ENCODE measurements at regions of chr12 and their contacts with region 1.

Region 1: DNA sequence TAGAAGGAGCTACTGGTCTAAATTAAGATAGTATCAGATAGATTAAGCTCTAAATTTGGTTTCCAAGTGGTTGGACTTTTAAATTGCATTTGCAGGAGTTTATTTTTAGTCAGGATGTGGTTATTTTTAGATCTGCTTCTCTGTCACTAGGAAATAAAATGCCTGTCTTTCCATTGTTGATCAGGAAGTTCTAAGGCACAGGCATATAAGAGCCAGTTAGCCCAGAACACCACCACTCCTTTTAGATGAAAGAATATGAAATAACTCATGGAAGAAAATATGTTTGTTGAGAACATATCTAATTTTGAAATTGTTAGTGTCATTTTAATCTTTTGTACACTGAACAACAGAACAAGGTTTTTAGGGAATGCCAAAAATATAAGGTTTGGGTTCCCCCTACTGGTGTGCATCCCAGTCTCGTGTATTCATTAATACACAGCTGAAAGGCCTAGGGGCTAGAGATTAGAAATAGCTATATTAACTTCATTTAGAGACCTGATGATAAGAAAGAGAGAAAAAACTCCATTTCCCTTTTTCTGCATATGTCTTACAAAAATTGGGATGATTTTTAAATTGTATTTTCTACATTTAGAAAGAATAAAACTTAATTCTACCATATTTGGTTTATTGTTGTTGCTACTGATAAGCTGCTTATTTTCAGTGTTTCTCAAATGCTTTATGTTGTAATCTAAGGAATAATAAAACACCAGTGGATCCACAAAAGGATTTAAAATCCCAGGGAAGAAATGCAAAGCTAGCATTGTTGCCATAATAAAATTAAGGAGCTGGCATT is 67.2 kb downstream of the RIC8B start:
- DNase-seq: peak in 3 of 5 donors; percentile 22 to 29 (median 27)
- ATAC-seq: peak; percentile 80 to 88 (median 85)
- H3K4me3 ChIP-seq: peak overlapping the region in 1 of 12 donors; percentile 1
- H3K27ac ChIP-seq: peak overlapping the region; percentile 8 to 70 (median 54)
- H3K4me1 ChIP-seq: peaks cover 5 to 39% (median 29%) of the 10 kb centered on the region in 12 donors
- H3K27me3 ChIP-seq: no peaks in the 10 kb centered on the region
- CTCF ChIP-seq: peak; percentile 34 to 79 (median 67)
- POLR2A ChIP-seq: no peak

Region 2: GRCh38 chr12:106309671-106310505 is 531.8 kb before region 1 on chr12:
- intact Hi-C with region 1: loop called in 1 of 10 experiments (anchors 5 kb)
- DNase-seq: peak in 2 of 5 donors; percentile 35 to 39
- ATAC-seq: peak in 3 of 4 donors; percentile 13 to 47 (median 28)
- H3K4me3 ChIP-seq: no peak overlapping the region
- H3K27ac ChIP-seq: peak overlapping the region in 11 of 12 donors; percentile 11 to 100 (median 52)
- H3K4me1 ChIP-seq: peaks cover 4 to 74% (median 65%) of the 10 kb centered on the region in 12 donors
- H3K27me3 ChIP-seq: no peaks in the 10 kb centered on the region
- CTCF ChIP-seq: no peak
- POLR2A ChIP-seq: no peak

Region 3: GRCh38 chr12:106386813-106387535 is 454.7 kb before region 1 on chr12:
- intact Hi-C with region 1: loop called (anchors 2 to 10 kb)
- DNase-seq: no peak
- ATAC-seq: no peak
- H3K4me3 ChIP-seq: no peak overlapping the region
- H3K27ac ChIP-seq: no peak overlapping the region
- H3K4me1 ChIP-seq: peaks cover 0 to 4% (median 0%) of the 10 kb centered on the region in 12 donors
- H3K27me3 ChIP-seq: no peaks in the 10 kb centered on the region
- CTCF ChIP-seq: no peak
- POLR2A ChIP-seq: no peak

Region 4: GRCh38 chr12:106392759-106393158 is 448.9 kb before region 1 on chr12:
- intact Hi-C with region 1: loop called (anchors 2 to 10 kb)
- DNase-seq: no peak
- ATAC-seq: no peak
- H3K4me3 ChIP-seq: no peak overlapping the region
- H3K27ac ChIP-seq: no peak overlapping the region
- H3K4me1 ChIP-seq: no peaks in the 10 kb centered on the region
- H3K27me3 ChIP-seq: no peaks in the 10 kb centered on the region
- CTCF ChIP-seq: no peak
- POLR2A ChIP-seq: no peak

Region 5: DNA sequence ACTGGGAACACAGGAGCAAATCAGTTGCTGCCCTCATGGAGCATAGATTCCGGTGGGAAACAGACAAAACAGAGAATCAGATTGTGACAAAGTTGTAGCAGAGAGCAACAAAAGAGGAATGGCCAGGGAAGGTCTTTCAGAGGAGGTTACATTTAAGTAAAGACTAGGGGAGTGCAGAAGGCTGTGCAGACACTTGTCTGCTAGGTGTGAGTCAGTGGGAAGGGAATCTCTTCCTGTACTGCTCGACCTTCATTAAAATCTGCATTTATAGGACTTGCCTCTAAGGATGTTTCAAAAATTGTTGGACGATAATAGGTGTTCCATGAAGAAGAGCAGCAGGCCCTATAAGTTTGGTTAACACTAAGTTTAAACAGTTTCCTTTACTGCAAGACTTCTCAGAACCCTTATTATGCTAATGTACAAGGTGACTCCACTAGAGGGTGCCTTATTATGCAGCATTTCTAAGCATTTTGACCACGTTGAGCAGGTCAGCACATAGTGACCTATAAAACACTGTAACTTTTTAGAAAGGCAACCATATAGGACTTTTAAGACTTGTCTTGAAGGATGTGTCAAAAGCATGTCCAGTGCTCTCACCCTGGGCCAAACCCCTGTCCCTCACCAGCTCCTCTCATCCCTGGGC is 159.0 kb before region 1 on chr12:
- intact Hi-C with region 1: loop called in 3 of 10 experiments (anchors 5 to 10 kb)
- DNase-seq: no peak
- ATAC-seq: peak in 2 of 4 donors; percentile 33 to 44
- H3K4me3 ChIP-seq: no peak overlapping the region
- H3K27ac ChIP-seq: no peak overlapping the region
- H3K4me1 ChIP-seq: no peaks in the 10 kb centered on the region
- H3K27me3 ChIP-seq: no peaks in the 10 kb centered on the region
- CTCF ChIP-seq: peak in 9 of 12 donors; percentile 4 to 42 (median 26)
- POLR2A ChIP-seq: no peak

Region 6: GRCh38 chr12:106774005-106774807 is 67.5 kb before region 1 on chr12 and contains the start of gene RIC8B:
- intact Hi-C with region 1: loop called in 4 of 10 experiments (anchors 2 to 5 kb)
- DNase-seq: peak; percentile 96 to 97 (median 97)
- ATAC-seq: peak; percentile 97 to 98 (median 97)
- H3K4me3 ChIP-seq: peak within 1 kb of the TSS; percentile 75 to 97 (median 90)
- H3K27ac ChIP-seq: peak within 1 kb of the TSS; percentile 71 to 99 (median 96)
- H3K4me1 ChIP-seq: peaks cover 5 to 31% (median 13%) of the 10 kb centered on the region in 12 donors
- H3K27me3 ChIP-seq: no peaks in the 10 kb centered on the region
- CTCF ChIP-seq: peak in 1 of 12 donors; percentile 13
- POLR2A ChIP-seq: peak in 1 of 2 donors; percentile 74
- total RNA-seq, gene RIC8B: 14.2 to 27.5 (median 22.8) TPM

Region 7: GRCh38 chr12:106910202-106910601 is 68.5 kb after region 1 on chr12:
- intact Hi-C with region 1: no loop called
- DNase-seq: no peak
- ATAC-seq: no peak
- H3K4me3 ChIP-seq: no peak overlapping the region
- H3K27ac ChIP-seq: no peak overlapping the region
- H3K4me1 ChIP-seq: no peaks in the 10 kb centered on the region
- H3K27me3 ChIP-seq: peaks cover 0 to 83% (median 0%) of the 10 kb centered on the region in 9 donors
- CTCF ChIP-seq: no peak
- POLR2A ChIP-seq: no peak

Region 8: GRCh38 chr12:106955377-106956047 is 113.8 kb after region 1 on chr12 and contains the start of gene TMEM263:
- intact Hi-C with region 1: loop called in 1 of 10 experiments (anchors 1 kb)
- DNase-seq: peak; percentile 96 to 98 (median 97)
- ATAC-seq: peak; percentile 88 to 96 (median 92)
- H3K4me3 ChIP-seq: peak within 1 kb of the TSS; percentile 59 to 98 (median 90)
- H3K27ac ChIP-seq: peak within 1 kb of the TSS; percentile 95 to 100 (median 99)
- H3K4me1 ChIP-seq: peaks cover 0 to 43% (median 25%) of the 10 kb centered on the region in 12 donors
- H3K27me3 ChIP-seq: no peaks in the 10 kb centered on the region
- CTCF ChIP-seq: peak in 3 of 12 donors; percentile 7 to 26 (median 8)
- POLR2A ChIP-seq: peak; percentile 72 to 96
- total RNA-seq, gene TMEM263: 26.8 to 59.2 (median 36.3) TPM

Region 9: GRCh38 chr12:106971065-106971464 is 129.4 kb after region 1 on chr12:
- intact Hi-C with region 1: no loop called
- DNase-seq: no peak
- ATAC-seq: no peak
- H3K4me3 ChIP-seq: no peak overlapping the region
- H3K27ac ChIP-seq: no peak overlapping the region
- H3K4me1 ChIP-seq: peaks cover 0 to 34% (median 20%) of the 10 kb centered on the region in 12 donors
- H3K27me3 ChIP-seq: no peaks in the 10 kb centered on the region
- CTCF ChIP-seq: no peak
- POLR2A ChIP-seq: no peak

Region 10: GRCh38 chr12:107236824-107237511 is 395.3 kb after region 1 on chr12:
- intact Hi-C with region 1: no loop called
- DNase-seq: no peak
- ATAC-seq: no peak
- H3K4me3 ChIP-seq: no peak overlapping the region
- H3K27ac ChIP-seq: no peak overlapping the region
- H3K4me1 ChIP-seq: no peaks in the 10 kb centered on the region
- H3K27me3 ChIP-seq: peaks cover 0 to 39% (median 4%) of the 10 kb centered on the region in 9 donors
- CTCF ChIP-seq: no peak
- POLR2A ChIP-seq: no peak